ENCODE measurements at regions of chr1 and their contacts with region 1.

Region 1: GRCh38 chr1:223081181-223081994 is 61.7 kb downstream of the TLR5 start:
- DNase-seq: peak; percentile 96
- H3K4me3 ChIP-seq: peak overlapping the region; percentile 23
- H3K27ac ChIP-seq: no peak overlapping the region
- H3K4me1 ChIP-seq: no peaks in the 10 kb centered on the region
- H3K27me3 ChIP-seq: no peaks in the 10 kb centered on the region
- CTCF ChIP-seq: peak; percentile 88

Region 2: GRCh38 chr1:222465211-222466041 is 616.0 kb before region 1 on chr1:
- CTCF ChIA-PET with region 1: no interaction called
- POLR2A ChIA-PET with region 1: no interaction called
- intact Hi-C with region 1: loop called (anchors 2 kb)
- DNase-seq: peak; percentile 91
- H3K4me3 ChIP-seq: peak overlapping the region; percentile 55
- H3K27ac ChIP-seq: peak overlapping the region; percentile 64
- H3K4me1 ChIP-seq: no peaks in the 10 kb centered on the region
- H3K27me3 ChIP-seq: no peaks in the 10 kb centered on the region
- CTCF ChIP-seq: peak; percentile 91

Region 3: GRCh38 chr1:222643938-222644635 is 437.3 kb before region 1 on chr1:
- CTCF ChIA-PET with region 1: no interaction called
- POLR2A ChIA-PET with region 1: no interaction called
- intact Hi-C with region 1: loop called (anchors 10 kb)
- DNase-seq: peak; percentile 99
- H3K4me3 ChIP-seq: peak overlapping the region; percentile 70
- H3K27ac ChIP-seq: peak overlapping the region; percentile 91
- H3K4me1 ChIP-seq: peaks cover 8% of the 10 kb centered on the region
- H3K27me3 ChIP-seq: no peaks in the 10 kb centered on the region
- CTCF ChIP-seq: no peak

Region 4: DNA sequence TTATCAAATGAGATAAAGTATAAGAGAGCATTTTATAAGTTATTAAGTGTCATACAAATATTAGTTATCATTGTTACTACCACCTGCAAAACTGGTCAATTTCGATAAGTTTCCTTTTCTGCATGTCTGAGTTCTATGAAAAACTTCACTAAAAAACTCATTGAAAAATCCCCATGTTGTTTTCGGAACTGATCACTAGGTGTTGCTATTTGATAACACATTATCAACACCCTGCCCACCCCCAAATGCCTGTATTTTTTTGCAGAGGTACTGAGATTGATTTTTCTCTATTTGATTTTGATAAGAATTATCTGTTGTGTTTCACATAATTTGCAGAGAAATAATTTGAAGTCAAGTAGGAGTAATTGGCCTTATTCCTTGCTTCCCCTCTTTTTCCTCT is 288.6 kb before region 1 on chr1:
- CTCF ChIA-PET with region 1: interaction called, 5 read pairs
- POLR2A ChIA-PET with region 1: no interaction called
- intact Hi-C with region 1: loop called (anchors 1 kb)
- DNase-seq: peak; percentile 33
- H3K4me3 ChIP-seq: no peak overlapping the region
- H3K27ac ChIP-seq: no peak overlapping the region
- H3K4me1 ChIP-seq: no peaks in the 10 kb centered on the region
- H3K27me3 ChIP-seq: no peaks in the 10 kb centered on the region
- CTCF ChIP-seq: peak; percentile 65

Region 5: DNA sequence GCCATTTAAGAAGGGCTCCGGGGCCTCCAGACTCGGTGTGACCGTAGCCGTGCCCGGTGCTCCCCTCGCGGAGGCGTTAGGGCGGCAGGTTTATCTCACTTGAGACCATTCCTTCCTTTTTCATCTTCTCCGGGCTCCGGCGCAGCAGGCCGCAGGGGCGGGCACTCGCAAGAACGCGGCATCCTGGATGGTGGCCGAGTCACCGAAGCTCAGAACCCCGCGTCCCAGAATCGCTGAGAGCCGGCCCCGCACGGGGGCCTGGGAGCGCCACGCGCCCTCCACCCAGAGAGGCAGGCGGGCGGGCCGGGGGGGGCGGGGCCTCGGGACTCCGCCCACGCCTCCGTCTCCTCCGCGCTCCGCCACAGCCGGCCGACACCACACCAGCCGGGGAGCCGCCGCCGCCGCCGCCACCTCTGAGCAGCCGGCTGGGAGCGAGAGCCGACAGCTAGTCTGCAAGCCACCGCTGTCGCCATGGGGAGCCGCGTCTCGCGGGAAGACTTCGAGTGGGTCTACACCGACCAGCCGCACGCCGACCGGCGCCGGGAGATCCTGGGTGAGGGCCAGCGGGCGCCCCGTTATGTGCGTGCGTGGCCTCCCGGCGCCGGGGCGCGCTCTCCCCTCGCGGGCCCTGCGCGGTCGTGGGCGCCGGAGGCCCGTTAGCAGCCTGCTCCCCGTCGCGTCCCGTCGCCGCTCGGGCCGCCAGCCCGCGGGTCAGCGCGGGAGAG is 1101.6 kb after region 1 on chr1 and contains the start of gene DEGS1:
- CTCF ChIA-PET with region 1: no interaction called
- POLR2A ChIA-PET with region 1: no interaction called
- intact Hi-C with region 1: no loop called
- DNase-seq: peak; percentile 93
- H3K4me3 ChIP-seq: peak within 1 kb of the TSS; percentile 97
- H3K27ac ChIP-seq: peak within 1 kb of the TSS; percentile 93
- H3K4me1 ChIP-seq: peaks cover 7% of the 10 kb centered on the region
- H3K27me3 ChIP-seq: no peaks in the 10 kb centered on the region
- CTCF ChIP-seq: no peak
- total RNA-seq, gene DEGS1: 55.4 and 70.0 TPM in 2 replicates

Measured in A673 (cell line).